ENCODE measurements at regions of chr4 and their contacts with region 1.

Region 1: DNA sequence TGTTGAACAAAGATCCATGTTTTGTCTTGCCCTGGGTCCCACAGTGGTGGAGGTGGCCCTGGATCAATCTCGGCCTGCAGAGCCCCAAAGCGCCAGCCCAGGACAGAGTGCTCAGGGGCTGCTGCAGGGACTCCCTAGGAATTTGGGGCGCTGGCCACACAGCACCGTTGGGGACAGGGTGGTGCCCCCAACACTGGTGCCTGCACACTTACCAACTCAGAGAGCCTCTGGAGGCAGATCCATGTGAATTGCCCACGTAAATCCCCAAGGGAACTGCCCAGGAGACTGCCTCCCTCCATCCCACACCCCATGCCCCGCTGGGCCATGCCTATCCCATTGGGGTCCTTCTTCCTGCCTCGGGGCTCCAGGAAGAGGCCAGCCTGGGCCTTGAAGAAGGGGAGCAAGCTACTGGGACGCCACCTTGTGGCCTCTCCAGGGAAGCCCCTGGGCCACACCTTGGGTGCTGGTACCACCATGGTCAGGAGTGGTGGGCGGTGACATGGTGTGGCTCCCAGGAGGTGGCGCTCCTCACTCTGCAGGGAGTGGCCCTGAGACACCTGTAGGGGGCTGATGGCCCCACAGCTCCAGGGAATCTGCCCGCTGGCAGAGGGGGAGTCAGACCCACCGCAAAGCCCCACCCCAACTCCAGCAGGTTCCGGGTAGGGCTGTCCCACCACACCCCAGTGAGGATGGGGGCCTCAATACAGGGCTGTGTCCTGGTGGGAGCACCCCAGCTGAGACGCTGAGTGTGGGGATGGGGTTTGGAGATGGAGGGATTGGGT is 22.8 kb downstream of the CFAP99 start:
- DNase-seq: peak; percentile 44 to 86 (median 76)
- ATAC-seq: peak; percentile 100
- H3K4me3 ChIP-seq: no peak overlapping the region
- H3K4me3 Mint-ChIP-seq: no peak overlapping the region
- H3K27ac ChIP-seq: no peak overlapping the region
- H3K27ac Mint-ChIP-seq: no peak overlapping the region
- H3K4me1 ChIP-seq: peaks cover 8% of the 10 kb centered on the region
- H3K4me1 Mint-ChIP-seq: peaks cover 2% of the 10 kb centered on the region
- H3K27me3 ChIP-seq: no peaks in the 10 kb centered on the region
- H3K27me3 Mint-ChIP-seq: no peaks in the 10 kb centered on the region
- CTCF ChIP-seq: peak; percentile 82

Region 2: DNA sequence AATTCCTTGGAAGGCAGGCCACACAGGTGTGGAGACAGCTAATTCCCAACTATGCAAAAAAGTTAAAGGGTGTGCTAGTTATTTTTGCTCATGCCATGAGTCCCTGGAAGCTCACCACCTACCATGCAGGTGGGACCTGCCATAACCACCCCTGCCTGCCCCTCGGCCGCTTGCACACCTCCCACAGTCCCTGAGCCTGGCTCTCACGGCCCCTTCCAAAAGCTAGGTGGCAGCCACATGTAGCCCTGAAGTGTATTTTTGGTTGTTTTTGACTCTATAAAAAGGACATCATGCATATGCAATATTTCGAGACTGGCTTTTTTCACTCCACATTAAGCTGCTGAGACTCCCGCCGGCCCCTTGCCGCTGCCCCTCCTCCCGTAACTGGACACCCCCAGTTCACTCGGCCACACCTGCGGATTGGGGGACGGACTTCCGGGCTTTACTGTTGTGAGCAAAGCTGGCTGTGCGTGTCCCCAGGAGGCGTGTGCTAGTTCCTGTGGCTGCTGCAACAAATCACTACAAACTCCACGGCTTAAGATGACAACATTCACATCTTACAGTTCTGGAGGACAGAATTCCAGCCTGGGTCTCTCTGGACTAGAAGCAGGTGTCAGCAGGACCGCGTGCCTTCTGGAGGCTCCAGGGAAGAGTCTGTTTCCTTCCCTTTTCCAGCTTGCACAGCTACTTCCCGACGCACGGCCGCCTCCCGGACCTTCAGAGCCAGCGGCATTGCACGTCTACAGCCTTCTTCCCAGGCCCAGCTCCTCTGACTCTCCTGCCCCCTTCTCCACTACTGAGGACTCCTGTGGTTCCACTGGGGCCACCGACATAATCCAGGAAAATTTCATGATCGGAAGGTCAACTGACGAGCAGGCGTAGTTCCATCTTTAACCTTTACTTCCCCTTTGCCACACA is 48.0 kb before region 1 on chr4:
- CTCF ChIA-PET with region 1: interaction called, 4 read pairs
- POLR2A ChIA-PET with region 1: no interaction called
- intact Hi-C with region 1: loop called in 1 of 2 experiments (anchors 1 kb)
- DNase-seq: peak in 4 of 9 experiments; percentile 21 to 65 (median 40)
- ATAC-seq: peak; percentile 47
- H3K4me3 ChIP-seq: peak overlapping the region; percentile 1 to 23
- H3K4me3 Mint-ChIP-seq: peak overlapping the region; percentile 61
- H3K27ac ChIP-seq: no peak overlapping the region
- H3K27ac Mint-ChIP-seq: no peak overlapping the region
- H3K4me1 ChIP-seq: peaks cover 12% of the 10 kb centered on the region
- H3K4me1 Mint-ChIP-seq: peaks cover 33% of the 10 kb centered on the region
- H3K27me3 ChIP-seq: no peaks in the 10 kb centered on the region
- H3K27me3 Mint-ChIP-seq: peaks cover 7% of the 10 kb centered on the region
- CTCF ChIP-seq: no peak